ENCODE measurements at regions of chr4 and their contacts with region 1.

Region 1: DNA sequence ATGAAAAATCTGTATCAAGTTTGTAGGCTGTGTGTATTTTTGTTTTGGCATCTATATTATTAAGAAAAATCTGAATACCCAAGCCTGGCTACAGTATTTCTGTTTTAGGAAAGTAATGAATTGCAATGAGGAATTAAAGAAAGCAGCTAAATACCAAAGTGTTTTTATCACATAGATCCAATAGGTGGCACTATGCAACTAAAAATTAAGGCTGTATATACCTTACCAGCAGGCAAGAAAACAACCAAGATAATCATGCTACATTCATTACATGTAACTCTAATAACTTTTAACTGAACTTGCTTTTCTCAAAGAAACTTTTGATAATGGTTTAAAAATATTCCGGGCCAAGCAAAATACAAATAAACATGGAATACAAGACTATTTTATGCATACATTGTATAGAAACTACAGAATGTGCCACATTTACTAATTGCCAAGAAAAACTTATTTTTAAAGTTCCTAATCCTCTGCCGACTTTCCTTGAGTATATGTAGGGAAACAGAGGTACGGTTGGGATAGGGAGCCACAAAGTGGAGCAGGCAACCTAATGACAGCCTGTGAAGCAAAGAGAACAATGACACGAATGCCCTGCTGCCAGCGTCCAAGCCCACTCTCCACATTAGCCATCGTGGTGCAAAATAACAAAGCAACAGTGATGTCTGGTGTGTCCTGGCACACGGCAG is 63.7 kb downstream of the SEC24D start:
- DNase-seq: peak in 2 of 5 donors; percentile 29 to 40
- H3K4me3 ChIP-seq: no peak overlapping the region
- H3K4me3 Mint-ChIP-seq: no peak overlapping the region
- H3K27ac ChIP-seq: no peak overlapping the region
- H3K27ac Mint-ChIP-seq: no peak overlapping the region
- H3K4me1 ChIP-seq: no peaks in the 10 kb centered on the region
- H3K4me1 Mint-ChIP-seq: no peaks in the 10 kb centered on the region
- H3K27me3 ChIP-seq: no peaks in the 10 kb centered on the region
- H3K27me3 Mint-ChIP-seq: no peaks in the 10 kb centered on the region

Region 2: DNA sequence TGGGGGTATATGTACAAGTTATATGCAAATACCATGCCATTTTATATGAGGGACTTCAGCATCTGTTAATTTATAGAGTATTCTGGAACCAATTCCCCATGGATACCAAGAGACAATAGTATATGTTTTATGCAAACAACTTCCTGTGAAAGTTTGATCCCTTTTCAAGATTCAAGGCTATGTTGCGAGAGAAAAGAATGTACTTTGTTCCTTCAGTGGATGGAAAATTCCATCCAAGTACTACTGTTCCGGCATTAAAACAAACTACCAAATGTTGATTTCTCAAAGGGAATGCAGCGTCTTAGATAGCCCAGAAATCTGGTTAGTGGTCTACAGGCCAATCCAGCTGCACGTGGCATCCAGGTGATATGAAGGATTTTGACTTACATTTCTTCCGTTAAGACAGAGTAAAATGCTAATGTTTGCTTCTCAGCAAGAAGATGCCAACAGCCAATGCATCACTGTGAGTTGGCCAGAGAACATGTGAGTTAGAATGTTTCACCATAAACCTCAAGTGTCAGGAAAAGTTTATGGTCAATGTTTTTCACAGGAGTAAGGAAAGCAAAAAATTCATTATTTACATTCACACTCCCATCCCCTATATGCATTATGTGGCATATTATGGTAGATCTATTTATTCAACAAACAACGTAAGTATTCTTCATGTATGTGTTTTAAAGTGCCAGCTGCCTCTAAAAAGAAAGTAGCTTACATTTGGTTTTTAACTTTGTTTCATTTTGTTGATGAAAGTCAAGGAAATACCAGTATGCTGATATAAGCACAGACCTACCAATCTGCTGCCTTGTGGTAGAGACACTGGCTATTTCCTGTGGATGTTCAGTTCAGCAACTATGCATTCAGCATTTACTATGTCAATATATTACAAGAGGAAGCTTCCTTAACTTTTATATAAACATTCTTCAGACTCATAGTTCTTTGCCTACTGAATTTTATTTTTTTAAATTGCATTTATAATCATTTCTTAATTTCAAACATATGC is 42.6 kb before region 1 on chr4:
- CTCF ChIA-PET with region 1: no interaction called
- POLR2A ChIA-PET with region 1: no interaction called
- DNase-seq: peak in 1 of 5 donors; percentile 16
- H3K4me3 ChIP-seq: no peak overlapping the region
- H3K4me3 Mint-ChIP-seq: no peak overlapping the region
- H3K27ac ChIP-seq: no peak overlapping the region
- H3K27ac Mint-ChIP-seq: peak overlapping the region in 5 of 8 donors; percentile 6 to 70 (median 52)
- H3K4me1 ChIP-seq: peaks cover 4% of the 10 kb centered on the region
- H3K4me1 Mint-ChIP-seq: peaks cover 4 to 11% (median 10%) of the 10 kb centered on the region in 3 donors
- H3K27me3 ChIP-seq: no peaks in the 10 kb centered on the region
- H3K27me3 Mint-ChIP-seq: no peaks in the 10 kb centered on the region

Region 3: GRCh38 chr4:118888666-118889311 is 116.6 kb after region 1 on chr4 and contains the start of gene SYNPO2:
- CTCF ChIA-PET with region 1: interaction called, 10 read pairs
- POLR2A ChIA-PET with region 1: no interaction called
- DNase-seq: peak in 4 of 5 donors; percentile 1 to 47 (median 6)
- H3K4me3 ChIP-seq: peak within 1 kb of the TSS; percentile 34
- H3K4me3 Mint-ChIP-seq: peak within 1 kb of the TSS in 6 of 7 donors; percentile 59 to 85 (median 80)
- H3K27ac ChIP-seq: no peak within 1 kb of the TSS
- H3K27ac Mint-ChIP-seq: peak within 1 kb of the TSS in 1 of 8 donors; percentile 40
- H3K4me1 ChIP-seq: peaks cover 7% of the 10 kb centered on the region
- H3K4me1 Mint-ChIP-seq: peaks cover 12 to 20% (median 19%) of the 10 kb centered on the region in 3 donors
- H3K27me3 ChIP-seq: peaks cover 14% of the 10 kb centered on the region
- H3K27me3 Mint-ChIP-seq: peaks cover 31 to 63% of the 10 kb centered on the region in 2 donors
- total RNA-seq, gene SYNPO2: 0.16 to 0.22 TPM